ENCODE measurements at regions of chr18 and their contacts with region 1.

Region 1: DNA sequence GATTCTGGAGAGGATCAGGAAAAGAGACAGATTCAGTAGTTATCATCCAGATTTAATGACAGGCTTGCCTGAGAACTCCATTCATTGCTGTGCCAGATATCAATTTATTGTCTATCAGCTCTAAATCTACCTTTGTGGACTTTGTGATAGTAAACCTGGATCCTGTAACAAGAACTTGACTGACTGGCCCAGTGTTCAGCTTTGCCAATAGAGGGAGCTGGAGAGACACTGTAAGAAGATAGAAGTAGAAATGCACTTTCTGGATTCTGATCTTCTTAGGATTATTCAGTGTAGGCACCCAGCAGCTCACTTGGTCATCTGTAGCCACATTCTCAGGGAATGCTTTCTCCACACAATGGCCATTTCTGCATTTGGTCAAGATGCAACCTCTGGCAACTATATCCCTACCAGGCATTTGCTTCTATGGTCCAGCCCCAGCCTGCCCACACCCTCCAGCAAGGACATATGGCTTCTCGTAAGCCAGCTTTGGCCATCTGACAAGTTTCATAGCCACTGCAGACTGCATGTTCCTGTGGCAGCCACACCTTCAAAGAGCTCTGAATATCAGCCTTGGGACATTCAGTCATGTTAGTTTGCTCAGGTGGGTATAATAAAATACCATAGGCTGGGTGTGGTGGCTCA is 6.1 kb upstream of the SERPINB8 start:
- DNase-seq: peak; percentile 55
- ATAC-seq: peak; percentile 86
- H3K4me3 ChIP-seq: no peak overlapping the region
- H3K27ac ChIP-seq: no peak overlapping the region
- H3K4me1 ChIP-seq: peaks cover 8% of the 10 kb centered on the region; the same call in 1 of the 2 replicates
- H3K27me3 ChIP-seq: no peaks in the 10 kb centered on the region
- CTCF ChIP-seq: peak; percentile 73
- EP300 ChIP-seq: no peak
- POLR2A ChIP-seq: no peak
- RAD21 ChIP-seq: no peak

Region 2: DNA sequence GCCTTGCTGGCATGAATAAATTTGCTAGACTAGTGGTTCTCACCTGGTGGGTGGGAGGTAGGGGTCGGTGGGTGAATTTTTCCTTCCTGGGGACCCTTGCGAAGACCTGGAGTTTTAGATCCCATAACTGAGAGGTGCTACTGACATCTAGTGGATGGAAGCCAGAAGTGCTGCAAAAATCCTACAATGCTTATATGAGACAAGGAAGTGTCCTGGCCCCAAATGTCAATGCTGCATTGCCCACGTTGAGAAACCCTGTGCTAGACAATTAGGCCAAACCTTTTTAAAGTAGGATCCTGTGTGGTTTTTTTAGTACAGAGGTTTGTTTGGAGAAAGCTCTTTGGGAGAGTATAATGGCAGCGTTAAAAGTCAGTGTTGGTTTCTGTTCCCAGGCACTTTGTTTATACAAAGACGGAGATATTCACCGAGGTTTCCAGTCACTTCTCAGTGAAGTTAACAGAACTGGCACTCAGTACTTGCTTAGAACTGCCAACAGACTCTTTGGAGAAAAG is 15.7 kb after region 1 on chr18:
- CTCF ChIA-PET with region 1: interaction called, 15 read pairs
- POLR2A ChIA-PET with region 1: no interaction called
- in situ Hi-C with region 1: no loop called
- intact Hi-C with region 1: loop called (anchors 1 kb)
- DNase-seq: peak; percentile 66
- ATAC-seq: peak; percentile 94
- H3K4me3 ChIP-seq: no peak overlapping the region
- H3K27ac ChIP-seq: no peak overlapping the region
- H3K4me1 ChIP-seq: no peaks in the 10 kb centered on the region
- H3K27me3 ChIP-seq: no peaks in the 10 kb centered on the region
- CTCF ChIP-seq: peak; percentile 83
- EP300 ChIP-seq: no peak
- POLR2A ChIP-seq: no peak
- RAD21 ChIP-seq: no peak

Region 3: GRCh38 chr18:63994783-63995399 is 31.2 kb after region 1 on chr18:
- CTCF ChIA-PET with region 1: interaction called, 11 read pairs
- POLR2A ChIA-PET with region 1: no interaction called
- in situ Hi-C with region 1: no loop called
- intact Hi-C with region 1: loop called (anchors 1 kb)
- DNase-seq: peak; percentile 16
- ATAC-seq: peak; percentile 75
- H3K4me3 ChIP-seq: no peak overlapping the region
- H3K27ac ChIP-seq: no peak overlapping the region
- H3K4me1 ChIP-seq: no peaks in the 10 kb centered on the region
- H3K27me3 ChIP-seq: no peaks in the 10 kb centered on the region
- CTCF ChIP-seq: peak; percentile 74
- EP300 ChIP-seq: no peak
- POLR2A ChIP-seq: no peak
- RAD21 ChIP-seq: no peak